Esophagus squamous epithelium (tissue), 5 donors: ENCODE measurements at regions of chr22 and their contacts with region 1.

Region 1: DNA sequence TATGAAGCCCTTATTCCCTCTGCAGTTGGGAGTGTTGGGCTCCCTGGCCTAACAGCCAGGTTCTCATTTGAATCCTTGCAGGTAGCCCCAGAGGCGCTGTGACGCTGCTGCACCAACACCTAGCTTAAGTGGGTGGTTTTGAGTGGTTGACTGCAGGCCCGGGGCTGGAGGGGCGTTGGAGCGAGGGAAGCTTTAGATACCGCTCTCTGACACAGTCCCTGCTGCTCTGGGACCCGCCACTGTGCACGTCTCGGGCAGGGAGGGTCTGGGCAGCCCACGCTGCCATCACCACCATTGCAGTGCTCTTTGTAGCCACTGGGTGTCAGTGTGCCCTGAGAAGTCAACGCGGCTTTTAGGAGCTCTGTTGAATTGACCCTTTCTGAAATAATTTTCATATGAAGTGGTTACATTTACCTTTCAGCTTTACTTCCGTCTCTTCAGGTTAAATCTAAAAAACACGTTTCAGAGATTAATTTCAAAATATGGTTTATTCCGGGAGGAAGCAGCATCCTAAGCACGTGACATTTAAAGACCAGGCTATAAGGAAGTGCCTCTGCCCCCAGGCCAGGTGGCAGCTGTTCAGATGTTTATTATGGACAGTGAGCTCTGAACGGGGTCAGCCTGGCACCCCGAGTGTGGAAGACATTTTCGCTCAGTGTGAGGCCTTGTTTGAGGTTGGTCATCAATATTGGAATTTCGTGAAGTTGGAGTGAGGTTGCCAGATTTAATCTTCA is 30.9 kb upstream of the PARVB start:
- DNase-seq: no peak
- H3K4me3 ChIP-seq: no peak overlapping the region
- H3K27ac ChIP-seq: no peak overlapping the region
- H3K4me1 ChIP-seq: peaks cover 0 to 14% (median 2%) of the 10 kb centered on the region in 3 donors
- H3K27me3 ChIP-seq: no peaks in the 10 kb centered on the region
- CTCF ChIP-seq: peak; percentile 85 to 98 (median 90)
- POLR2A ChIP-seq: no peak

Region 2: GRCh38 chr22:43828998-43829782 is 164.0 kb before region 1 on chr22:
- intact Hi-C with region 1: no loop called
- DNase-seq: no peak
- H3K4me3 ChIP-seq: no peak overlapping the region
- H3K27ac ChIP-seq: peak overlapping the region in 3 of 4 donors; percentile 53 to 79 (median 74)
- H3K4me1 ChIP-seq: peaks cover 3 to 40% (median 10%) of the 10 kb centered on the region in 3 donors
- H3K27me3 ChIP-seq: peaks cover 0 to 50% (median 0%) of the 10 kb centered on the region in 4 donors
- CTCF ChIP-seq: peak in 1 of 6 experiments; percentile 7
- POLR2A ChIP-seq: no peak

Region 3: DNA sequence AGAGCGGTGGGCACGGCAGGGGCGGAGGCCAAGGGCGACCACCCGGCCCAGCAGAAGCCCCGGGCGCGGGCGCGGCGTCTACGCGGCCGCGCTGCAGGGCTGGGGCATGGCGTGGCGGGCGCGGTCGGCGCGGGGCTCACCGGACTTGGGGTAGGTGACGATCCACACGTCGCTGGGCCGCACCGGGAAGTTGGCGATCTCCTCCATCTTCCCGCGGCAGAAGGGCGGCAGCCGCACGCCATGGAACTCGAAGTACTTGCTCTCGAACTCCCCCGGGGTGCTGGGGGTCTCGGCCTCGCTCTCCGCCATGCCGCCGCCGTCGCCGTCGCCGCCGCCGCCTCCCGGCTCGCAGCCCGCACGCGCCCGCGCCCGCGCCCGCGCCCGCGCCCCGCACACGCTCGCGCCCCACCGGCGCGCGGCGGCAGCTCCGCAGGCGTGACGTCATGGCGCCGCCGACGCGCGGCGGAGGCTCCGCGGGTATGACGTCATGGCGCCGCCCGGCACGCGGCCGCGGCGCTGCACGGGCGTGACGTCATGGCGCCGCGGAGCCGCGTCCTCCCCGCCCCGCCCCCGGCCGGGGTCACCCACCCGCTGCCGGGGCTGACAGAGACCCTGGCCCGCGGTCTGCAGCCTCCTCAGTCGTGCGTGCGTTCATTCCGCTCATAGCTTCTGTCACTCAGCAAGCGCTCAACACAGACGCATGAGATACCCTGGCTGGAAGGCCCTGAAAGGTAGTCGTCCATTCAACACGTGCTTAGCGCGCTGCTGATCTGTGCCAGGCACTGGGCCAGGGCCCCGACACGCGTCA is 130.9 kb before region 1 on chr22 and contains the start of gene SULT4A1:
- intact Hi-C with region 1: no loop called
- DNase-seq: no peak
- H3K4me3 ChIP-seq: peak within 1 kb of the TSS in 2 of 4 donors; percentile 29 to 49
- H3K27ac ChIP-seq: no peak within 1 kb of the TSS
- H3K4me1 ChIP-seq: peaks cover 0 to 10% (median 7%) of the 10 kb centered on the region in 3 donors
- H3K27me3 ChIP-seq: peaks cover 0 to 96% (median 4%) of the 10 kb centered on the region in 4 donors
- CTCF ChIP-seq: no peak
- POLR2A ChIP-seq: no peak
- total RNA-seq, gene SULT4A1: not detected

Region 4: GRCh38 chr22:44080936-44081861 is 88.0 kb after region 1 on chr22:
- intact Hi-C with region 1: loop called (anchors 5 kb)
- DNase-seq: no peak
- H3K4me3 ChIP-seq: peak overlapping the region in 1 of 4 donors; percentile 39
- H3K27ac ChIP-seq: no peak overlapping the region
- H3K4me1 ChIP-seq: peaks cover 3 to 21% (median 6%) of the 10 kb centered on the region in 3 donors
- H3K27me3 ChIP-seq: peaks cover 0 to 31% (median 0%) of the 10 kb centered on the region in 4 donors
- CTCF ChIP-seq: peak; percentile 67 to 92 (median 78)
- POLR2A ChIP-seq: no peak

Region 5: DNA sequence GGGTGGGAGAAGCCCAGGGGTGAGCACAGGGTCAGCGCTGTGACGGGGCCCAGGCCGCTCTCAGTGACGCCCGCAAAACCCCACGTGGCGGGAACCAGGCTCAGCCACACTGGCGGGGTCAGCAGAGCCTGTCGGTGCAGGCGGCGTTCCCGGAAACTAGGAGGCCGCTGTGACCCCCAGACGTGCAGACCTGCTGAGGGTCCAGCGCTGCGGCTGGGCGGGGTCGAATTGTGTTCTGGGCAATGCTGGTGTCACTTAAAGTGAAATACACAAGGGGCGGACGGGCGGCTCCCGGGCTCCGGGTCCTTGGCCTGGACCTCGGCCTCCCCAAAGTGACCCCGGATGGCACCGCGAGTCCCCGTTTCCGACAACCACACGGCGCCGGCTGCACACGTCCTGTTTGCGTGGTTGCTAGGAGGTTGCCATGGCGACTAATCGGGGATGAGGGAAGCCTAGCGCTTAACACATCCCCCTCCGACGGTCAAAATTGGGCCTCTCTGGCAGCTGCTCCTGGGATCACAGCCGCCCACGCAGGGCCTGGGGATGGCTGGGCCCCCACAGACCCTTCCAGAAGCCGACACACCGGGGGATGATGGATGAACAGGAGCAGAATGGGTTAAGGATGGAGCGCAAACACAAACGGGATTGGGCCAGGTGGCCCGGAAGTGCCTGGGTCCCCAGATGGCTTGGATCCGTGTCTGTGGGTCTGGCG is 627.1 kb after region 1 on chr22:
- intact Hi-C with region 1: loop called (anchors 5 kb)
- DNase-seq: no peak
- H3K4me3 ChIP-seq: peak overlapping the region in 1 of 4 donors; percentile 35
- H3K27ac ChIP-seq: peak overlapping the region in 2 of 4 donors; percentile 14 to 50
- H3K4me1 ChIP-seq: peaks cover 5 to 15% (median 9%) of the 10 kb centered on the region in 3 donors
- H3K27me3 ChIP-seq: peaks cover 0 to 60% (median 4%) of the 10 kb centered on the region in 4 donors
- CTCF ChIP-seq: no peak
- POLR2A ChIP-seq: no peak